SK-N-SH (cell line): ENCODE measurements at regions of chr6 and their contacts with region 1.

Region 1: GRCh38 chr6:53504512-53504911 is 40.4 kb downstream of the GCLC start:
- DNase-seq: no peak
- H3K4me3 ChIP-seq: no peak overlapping the region
- H3K27ac ChIP-seq: no peak overlapping the region
- H3K4me1 ChIP-seq: no peaks in the 10 kb centered on the region; a peak in 1 of 4 replicates
- H3K27me3 ChIP-seq: no peaks in the 10 kb centered on the region
- CTCF ChIP-seq: no peak
- EP300 ChIP-seq: no peak
- RAD21 ChIP-seq: no peak

Region 2: GRCh38 chr6:53461041-53461656 is 43.4 kb before region 1 on chr6:
- CTCF ChIA-PET with region 1: no interaction called
- POLR2A ChIA-PET with region 1: no interaction called
- DNase-seq: no peak
- H3K4me3 ChIP-seq: no peak overlapping the region
- H3K27ac ChIP-seq: no peak overlapping the region
- H3K4me1 ChIP-seq: peaks cover 0 to 2% of the 10 kb centered on the region in 2 experiments; a peak in 1 of 4 replicates
- H3K27me3 ChIP-seq: no peaks in the 10 kb centered on the region; the same call in 1 of the 2 replicates
- CTCF ChIP-seq: no peak
- EP300 ChIP-seq: no peak
- RAD21 ChIP-seq: no peak

Region 3: GRCh38 chr6:53524455-53524815 is 19.9 kb after region 1 on chr6:
- CTCF ChIA-PET with region 1: interaction called, 11 read pairs
- POLR2A ChIA-PET with region 1: no interaction called
- DNase-seq: no peak
- H3K4me3 ChIP-seq: no peak overlapping the region
- H3K27ac ChIP-seq: no peak overlapping the region
- H3K4me1 ChIP-seq: peaks cover 13 to 15% of the 10 kb centered on the region in 2 experiments; a peak in 3 of 4 replicates
- H3K27me3 ChIP-seq: no peaks in the 10 kb centered on the region
- CTCF ChIP-seq: no peak
- EP300 ChIP-seq: no peak
- RAD21 ChIP-seq: no peak